ENCODE measurements at regions of chr2 and their contacts with region 1.

Region 1: DNA sequence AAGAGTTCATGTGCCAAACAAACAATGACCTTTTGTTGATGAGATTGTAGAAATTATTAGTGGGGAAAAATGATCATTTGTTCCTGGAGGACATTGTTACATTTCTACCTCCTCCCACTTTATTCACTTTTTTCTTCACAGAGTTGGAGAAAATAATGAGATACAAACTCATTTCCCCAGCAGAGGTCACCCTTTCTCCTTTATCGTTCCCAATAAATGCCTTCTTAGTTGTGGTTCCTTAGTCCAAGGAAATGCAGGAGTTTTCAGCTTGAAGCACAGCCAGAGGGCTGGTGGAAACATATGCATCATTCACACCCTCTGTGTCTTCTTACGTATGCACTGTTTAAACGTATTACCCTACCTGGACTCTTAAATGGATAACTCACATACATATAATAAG is 108.8 kb downstream of the SLC4A3 start:
- DNase-seq: peak; percentile 54
- H3K4me3 Mint-ChIP-seq: no peak overlapping the region
- H3K27ac Mint-ChIP-seq: no peak overlapping the region
- H3K4me1 Mint-ChIP-seq: no peaks in the 10 kb centered on the region
- H3K27me3 Mint-ChIP-seq: no peaks in the 10 kb centered on the region
- CTCF ChIP-seq: peak; percentile 67

Region 2: DNA sequence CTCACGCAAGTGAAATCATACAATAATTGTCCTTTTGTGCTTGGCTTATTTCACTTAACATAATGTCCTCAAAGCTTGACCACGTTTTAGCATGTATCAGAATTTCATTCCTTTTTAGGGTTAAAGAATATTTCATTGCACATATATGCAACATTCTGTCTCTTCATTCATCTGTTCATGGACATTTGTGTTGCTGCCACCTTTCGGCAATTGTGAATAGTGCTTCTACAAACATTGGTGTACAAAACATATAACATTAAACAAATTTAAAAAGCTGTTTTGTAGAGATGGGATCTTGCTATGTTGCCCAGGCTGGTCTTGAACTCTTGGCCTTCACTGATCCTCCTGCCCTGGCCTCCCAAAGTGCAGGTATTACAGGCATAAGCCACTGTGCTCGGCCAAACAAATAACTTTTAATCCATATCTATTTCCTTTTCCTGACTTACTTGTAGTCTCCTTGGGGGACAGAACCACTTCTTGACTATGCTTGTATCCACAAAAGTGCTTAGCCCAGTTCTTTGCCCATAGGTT is 100.5 kb after region 1 on chr2:
- CTCF ChIA-PET with region 1: no interaction called
- intact Hi-C with region 1: loop called (anchors 1 kb)
- DNase-seq: peak; percentile 20
- H3K4me3 Mint-ChIP-seq: no peak overlapping the region
- H3K27ac Mint-ChIP-seq: no peak overlapping the region
- H3K4me1 Mint-ChIP-seq: no peaks in the 10 kb centered on the region
- H3K27me3 Mint-ChIP-seq: peaks cover 3% of the 10 kb centered on the region
- CTCF ChIP-seq: no peak

Region 3: DNA sequence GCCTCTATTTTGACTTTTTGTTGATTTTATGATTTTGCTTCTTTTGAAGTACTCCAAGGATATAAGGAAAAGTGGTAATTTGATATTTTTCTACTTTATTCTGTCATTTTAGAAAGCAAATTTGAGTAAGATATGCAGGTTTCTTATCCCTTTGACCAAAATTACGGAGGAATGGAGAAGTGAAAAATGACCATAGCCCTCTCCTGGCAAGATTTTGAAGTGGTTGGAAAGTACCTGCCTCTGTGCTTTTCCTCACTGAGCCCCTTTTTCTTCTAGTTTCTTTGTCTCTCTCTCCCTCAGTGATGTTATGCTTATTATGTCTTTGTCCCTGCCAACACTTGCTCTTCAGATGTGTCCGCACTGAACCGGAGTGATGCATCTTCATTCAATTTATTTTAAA is 937.8 kb after region 1 on chr2:
- CTCF ChIA-PET with region 1: no interaction called
- intact Hi-C with region 1: loop called (anchors 5 kb)
- DNase-seq: no peak
- H3K4me3 Mint-ChIP-seq: no peak overlapping the region
- H3K27ac Mint-ChIP-seq: no peak overlapping the region
- H3K4me1 Mint-ChIP-seq: no peaks in the 10 kb centered on the region
- H3K27me3 Mint-ChIP-seq: no peaks in the 10 kb centered on the region
- CTCF ChIP-seq: no peak